ENCODE measurements at regions of chr17 and their contacts with region 1.

Region 1: DNA sequence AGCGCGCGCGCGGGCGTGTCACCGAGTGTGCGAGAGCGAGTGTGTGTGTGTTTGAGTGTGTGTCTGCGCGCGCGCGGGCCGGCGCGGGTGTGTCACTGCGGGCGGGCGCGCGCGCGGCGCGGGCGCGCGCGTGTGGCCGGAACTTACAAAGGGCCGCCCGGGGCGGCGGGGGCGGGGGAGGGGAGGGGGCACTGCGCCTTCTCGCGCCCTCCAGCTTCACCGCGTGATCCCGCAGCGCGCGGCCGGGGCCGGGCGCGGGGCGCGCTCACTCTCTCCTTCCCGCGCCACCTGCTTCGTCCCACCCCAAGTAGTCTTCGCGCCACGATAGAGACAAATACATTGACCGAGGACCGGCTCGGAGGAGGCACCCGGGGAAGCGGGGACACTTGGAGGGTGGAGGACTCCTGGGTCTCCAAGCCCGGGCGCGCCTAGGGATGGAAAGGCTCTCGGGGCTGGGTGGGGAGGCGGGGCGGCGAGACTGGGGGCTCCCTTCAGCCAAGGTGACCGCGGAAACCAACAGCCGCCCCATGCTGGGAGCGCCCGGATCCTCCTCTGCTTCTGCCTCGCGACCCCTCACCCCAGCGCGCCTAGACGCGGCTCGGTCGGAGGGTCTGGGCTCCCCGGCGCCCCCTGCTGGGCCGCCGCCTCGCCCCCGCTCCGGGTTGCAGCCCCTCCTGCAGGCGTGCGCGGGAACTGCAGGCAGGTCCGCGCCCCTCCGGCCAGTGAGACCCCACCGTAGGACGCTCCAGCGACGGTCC is at the start of gene SRCIN1:
- DNase-seq: peak; percentile 57 to 90 (median 78)

Region 2: GRCh38 chr17:38656959-38657823 is 51.1 kb after region 1 on chr17:
- intact Hi-C with region 1: loop called (anchors 5 kb)
- DNase-seq: peak; percentile 58 to 96 (median 83)